Head of caudate nucleus (tissue), 42 donors: ENCODE measurements at regions of chr10 and their contacts with region 1.

Region 1: DNA sequence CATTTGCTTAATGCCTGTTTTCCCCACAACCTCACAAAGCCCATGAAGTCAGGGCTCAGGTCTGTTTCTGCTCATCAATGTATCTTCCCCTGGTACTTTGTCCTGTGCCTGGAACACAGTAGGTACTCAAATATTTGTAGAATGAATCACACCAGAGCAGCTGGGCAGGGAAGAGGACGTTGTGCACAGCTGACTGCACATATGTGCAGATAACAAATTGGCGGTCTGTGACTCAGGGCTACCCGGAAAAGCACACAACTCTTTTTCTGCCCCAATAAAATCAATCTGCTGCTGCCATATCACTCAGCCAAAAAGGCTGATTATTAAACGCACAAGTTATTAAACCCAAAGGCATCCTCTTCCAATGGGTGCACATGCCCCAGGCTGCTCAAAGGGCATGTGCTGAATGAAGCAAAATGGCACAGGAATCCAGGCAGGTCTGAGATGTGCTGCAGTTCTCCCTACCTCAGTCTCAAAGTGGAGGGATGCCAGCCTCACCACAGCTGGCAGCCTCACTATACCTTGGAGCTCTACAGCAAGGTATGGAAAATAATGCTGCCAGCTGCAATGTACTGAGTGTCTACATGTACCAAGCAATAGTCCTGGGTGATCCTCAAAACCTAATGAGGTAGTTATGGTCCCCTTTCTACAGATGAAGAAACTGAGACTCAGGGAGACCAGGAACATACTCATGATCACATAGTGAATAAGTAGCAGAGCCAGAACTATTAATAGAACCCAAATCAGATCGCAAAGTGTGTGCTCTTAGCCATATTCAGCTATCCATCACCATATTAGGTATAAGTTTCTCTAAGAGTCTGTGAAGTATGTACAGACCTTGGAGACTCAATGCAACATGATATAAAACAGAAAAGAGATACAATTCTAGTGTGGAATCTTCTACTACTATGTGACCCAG is 43.4 kb downstream of the SORBS1 start:
- DNase-seq: no peak

Region 2: DNA sequence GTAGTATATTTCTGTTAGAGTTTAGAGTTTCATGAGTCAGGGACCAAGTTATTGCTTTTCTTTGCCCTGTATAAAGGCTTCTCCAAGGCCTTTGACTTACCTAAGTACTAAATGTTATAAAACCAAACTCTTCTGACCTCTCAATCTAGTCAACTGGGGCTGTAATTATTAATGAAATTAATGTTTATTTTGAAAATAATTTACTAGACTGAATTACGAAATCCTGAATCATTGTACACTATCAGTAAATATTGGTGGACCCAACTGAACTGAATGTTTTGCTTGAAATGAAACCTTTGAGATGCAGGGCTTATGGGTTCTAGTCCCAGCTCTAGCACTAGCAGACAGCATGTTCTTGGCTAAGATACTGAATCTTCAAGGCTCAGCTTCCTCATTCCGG is 581.1 kb before region 1 on chr10:
- intact Hi-C with region 1: no loop called
- DNase-seq: no peak

Region 3: GRCh38 chr10:95559471-95559870 is 41.7 kb after region 1 on chr10:
- intact Hi-C with region 1: loop called (anchors 5 kb)
- DNase-seq: peak in 4 of 42 donors; percentile 25 to 50 (median 32)